Esophagus muscularis mucosa (tissue), 4 donors: ENCODE measurements at regions of chr12 and their contacts with region 1.

Region 1: DNA sequence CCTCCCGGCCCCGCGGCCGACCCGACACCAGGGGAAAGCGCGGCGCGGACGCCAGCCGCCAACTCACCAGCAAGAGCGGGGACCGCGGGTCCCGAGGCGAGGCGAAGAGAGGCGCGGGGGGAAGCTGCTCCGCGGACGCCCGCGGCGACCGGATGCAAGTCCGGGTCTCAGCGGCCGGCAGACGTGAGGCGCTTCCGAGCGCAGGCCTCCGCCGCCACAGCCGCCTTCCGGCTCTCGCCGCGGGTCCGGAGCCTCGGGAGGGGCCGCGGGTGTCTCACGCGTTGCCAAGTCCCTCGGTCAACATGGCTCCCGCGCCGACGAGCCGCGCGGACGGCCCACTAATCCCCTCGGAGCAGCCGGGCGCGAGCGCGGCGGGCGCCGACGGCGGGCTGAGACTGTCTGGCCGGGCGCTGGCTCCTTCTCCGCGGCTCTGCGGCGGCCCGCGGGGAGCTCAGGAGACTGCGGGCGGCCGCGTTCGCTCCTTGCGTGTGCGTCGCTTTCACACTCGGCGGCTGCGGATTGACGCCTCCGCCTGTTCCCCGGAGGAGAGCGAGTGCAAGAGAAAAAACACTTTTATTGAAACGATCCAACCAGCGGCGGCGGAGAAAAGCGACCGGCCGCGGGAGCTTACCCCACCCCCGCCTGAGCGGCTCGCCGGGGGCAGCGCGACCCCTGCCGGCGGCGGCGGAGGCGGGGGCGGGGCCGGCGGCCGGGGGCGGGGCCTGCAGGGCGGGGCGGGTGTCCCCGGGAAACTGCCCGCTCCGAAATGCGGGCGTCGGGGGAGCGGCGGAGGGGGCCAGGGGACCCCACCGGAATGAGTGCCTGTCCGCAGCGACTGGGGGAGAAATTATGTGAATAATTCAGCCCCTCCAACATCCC is at the start of gene CDK17:
- DNase-seq: peak; percentile 93
- H3K4me3 ChIP-seq: peak within 1 kb of the TSS; percentile 94 to 98 (median 96)
- H3K27ac ChIP-seq: peak within 1 kb of the TSS; percentile 100
- H3K4me1 ChIP-seq: peaks cover 9 to 41% (median 37%) of the 10 kb centered on the region in 4 donors
- H3K27me3 ChIP-seq: no peaks in the 10 kb centered on the region
- CTCF ChIP-seq: peak; percentile 43 to 66 (median 54)
- EP300 ChIP-seq: no peak
- POLR2A ChIP-seq: peak; percentile 70
- total RNA-seq, gene CDK17: 56.2 to 96.9 (median 68.6) TPM

Region 2: DNA sequence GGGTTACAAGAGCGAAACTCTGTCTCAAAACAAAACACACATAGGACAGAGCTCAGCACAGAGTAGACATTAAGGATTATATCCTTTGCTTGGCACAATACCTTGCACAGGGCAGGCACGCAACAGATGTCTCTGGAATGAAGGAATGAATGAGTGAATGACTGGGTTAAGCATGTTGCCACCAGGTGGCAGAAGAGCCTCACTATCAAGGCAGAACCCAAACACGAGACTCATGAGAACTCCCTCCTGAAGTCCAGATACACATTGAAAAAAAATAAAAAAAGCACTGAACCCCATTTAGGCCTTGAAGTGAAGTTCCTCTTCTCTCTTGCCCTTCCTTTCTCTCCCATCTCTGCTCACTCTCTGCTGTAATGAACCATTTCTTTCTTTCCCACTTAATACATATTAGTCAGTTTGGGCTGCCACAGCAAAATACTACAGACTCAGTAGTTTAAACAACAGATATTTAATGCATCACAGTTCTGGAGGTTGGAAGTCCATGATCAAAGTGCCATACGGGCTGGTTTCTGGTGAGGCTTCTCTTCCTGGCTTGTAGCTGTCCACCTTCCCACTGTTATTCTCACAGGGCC is 338.2 kb before region 1 on chr12:
- intact Hi-C with region 1: loop called (anchors 5 kb)
- DNase-seq: no peak
- H3K4me3 ChIP-seq: no peak overlapping the region
- H3K27ac ChIP-seq: no peak overlapping the region
- H3K4me1 ChIP-seq: peaks cover 0 to 9% (median 8%) of the 10 kb centered on the region in 4 donors
- H3K27me3 ChIP-seq: no peaks in the 10 kb centered on the region
- CTCF ChIP-seq: peak; percentile 78 to 86 (median 80)
- EP300 ChIP-seq: no peak
- POLR2A ChIP-seq: no peak

Region 3: GRCh38 chr12:96239711-96240635 is 160.2 kb before region 1 on chr12:
- intact Hi-C with region 1: loop called (anchors 1 kb)
- DNase-seq: peak; percentile 94
- H3K4me3 ChIP-seq: peak overlapping the region in 3 of 4 donors; percentile 1 to 12 (median 4)
- H3K27ac ChIP-seq: peak overlapping the region; percentile 92 to 95 (median 92)
- H3K4me1 ChIP-seq: peaks cover 73 to 100% (median 83%) of the 10 kb centered on the region in 4 donors
- H3K27me3 ChIP-seq: no peaks in the 10 kb centered on the region
- CTCF ChIP-seq: no peak
- EP300 ChIP-seq: peak; percentile 72
- POLR2A ChIP-seq: no peak

Region 4: GRCh38 chr12:96489103-96490056 is 89.2 kb after region 1 on chr12 and contains the start of gene CFAP54:
- intact Hi-C with region 1: loop called (anchors 5 kb)
- DNase-seq: peak; percentile 99
- H3K4me3 ChIP-seq: peak within 1 kb of the TSS; percentile 70 to 88 (median 78)
- H3K27ac ChIP-seq: peak within 1 kb of the TSS; percentile 72 to 90 (median 83)
- H3K4me1 ChIP-seq: peaks cover 4 to 27% (median 12%) of the 10 kb centered on the region in 4 donors
- H3K27me3 ChIP-seq: no peaks in the 10 kb centered on the region
- CTCF ChIP-seq: peak; percentile 79 to 95 (median 93)
- EP300 ChIP-seq: peak; percentile 33
- POLR2A ChIP-seq: no peak
- total RNA-seq, gene CFAP54: 3.0 to 5.8 (median 4.3) TPM